ENCODE measurements at regions of chrX and their contacts with region 1.

Region 1: DNA sequence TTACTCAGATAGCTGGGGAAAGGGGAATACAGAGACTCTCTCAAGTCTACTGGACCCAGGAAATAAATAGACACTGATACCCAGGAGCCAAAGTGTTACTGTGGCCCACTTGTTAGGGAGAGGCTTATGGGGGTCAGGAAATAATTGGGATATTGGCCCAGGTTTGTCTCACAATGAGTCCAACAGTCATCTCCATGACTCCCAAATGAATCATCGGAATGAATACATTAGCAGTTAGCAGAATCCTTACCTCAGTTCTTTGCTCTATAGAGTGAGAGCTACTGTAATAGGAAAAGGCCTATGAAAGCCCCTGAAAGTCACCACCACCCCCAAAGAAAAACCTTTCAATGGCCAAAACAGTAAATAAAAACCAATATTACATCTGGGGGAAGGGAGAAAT is 42.4 kb upstream of the ARHGEF6 start:
- DNase-seq: no peak
- ATAC-seq: no peak
- H3K4me3 ChIP-seq: no peak overlapping the region
- H3K27ac ChIP-seq: peak overlapping the region in 2 of 12 donors; percentile 16 to 28
- H3K4me1 ChIP-seq: no peaks in the 10 kb centered on the region
- H3K27me3 ChIP-seq: no peaks in the 10 kb centered on the region
- CTCF ChIP-seq: no peak
- POLR2A ChIP-seq: no peak

Region 2: DNA sequence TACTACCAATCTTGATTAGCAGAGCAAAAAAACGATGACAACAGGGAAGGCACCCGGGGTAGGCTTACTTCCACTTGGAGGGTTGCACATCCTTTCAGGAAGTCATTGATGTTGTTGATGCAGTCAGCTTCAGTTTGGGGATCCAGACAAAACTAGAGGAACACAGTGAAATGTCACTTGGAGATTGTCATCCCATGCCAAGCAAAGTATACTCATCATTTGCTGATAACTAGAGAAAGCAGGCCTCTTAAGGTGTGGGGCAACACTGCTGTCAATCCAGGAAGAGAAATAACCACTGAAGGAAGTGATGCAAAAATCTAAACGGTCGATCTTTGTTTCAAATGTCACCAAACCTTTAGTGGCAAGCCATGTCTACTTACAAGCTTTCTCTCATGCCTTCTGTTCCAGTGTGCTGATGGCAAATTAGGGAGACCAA is 43.8 kb before region 1 on chrX:
- intact Hi-C with region 1: loop called in 1 of 10 experiments (anchors 10 kb)
- DNase-seq: no peak
- ATAC-seq: peak in 2 of 4 donors; percentile 15 to 30
- H3K4me3 ChIP-seq: peak overlapping the region in 9 of 12 donors; percentile 27 to 58 (median 48)
- H3K27ac ChIP-seq: peak overlapping the region in 11 of 12 donors; percentile 23 to 85 (median 63)
- H3K4me1 ChIP-seq: peaks cover 0 to 17% (median 9%) of the 10 kb centered on the region in 12 donors
- H3K27me3 ChIP-seq: no peaks in the 10 kb centered on the region
- CTCF ChIP-seq: no peak
- POLR2A ChIP-seq: no peak

Region 3: GRCh38 chrX:137483567-137483966 is 660.4 kb after region 1 on chrX:
- intact Hi-C with region 1: no loop called
- DNase-seq: no peak
- ATAC-seq: no peak
- H3K4me3 ChIP-seq: no peak overlapping the region
- H3K27ac ChIP-seq: no peak overlapping the region
- H3K4me1 ChIP-seq: no peaks in the 10 kb centered on the region
- H3K27me3 ChIP-seq: peaks cover 0 to 17% (median 0%) of the 10 kb centered on the region in 9 donors
- CTCF ChIP-seq: no peak
- POLR2A ChIP-seq: no peak